ENCODE measurements at regions of chr9 and their contacts with region 1.

Region 1: GRCh38 chr9:4679268-4680172 is at the start of gene CDC37L1:
- DNase-seq: peak; percentile 94
- H3K4me3 Mint-ChIP-seq: no peak within 1 kb of the TSS
- H3K27ac Mint-ChIP-seq: no peak within 1 kb of the TSS
- H3K4me1 Mint-ChIP-seq: peaks cover 22% of the 10 kb centered on the region
- H3K27me3 Mint-ChIP-seq: no peaks in the 10 kb centered on the region
- CTCF ChIP-seq: peak; percentile 57
- total RNA-seq, gene CDC37L1: 13.8 and 20.4 TPM in 2 replicates

Region 2: GRCh38 chr9:4397917-4398316 is 281.6 kb before region 1 on chr9:
- CTCF ChIA-PET with region 1: no interaction called
- POLR2A ChIA-PET with region 1: no interaction called
- intact Hi-C with region 1: no loop called
- DNase-seq: peak; percentile 17
- H3K4me3 Mint-ChIP-seq: no peak overlapping the region
- H3K27ac Mint-ChIP-seq: no peak overlapping the region
- H3K4me1 Mint-ChIP-seq: peaks cover 6% of the 10 kb centered on the region
- H3K27me3 Mint-ChIP-seq: no peaks in the 10 kb centered on the region
- CTCF ChIP-seq: no peak

Region 3: DNA sequence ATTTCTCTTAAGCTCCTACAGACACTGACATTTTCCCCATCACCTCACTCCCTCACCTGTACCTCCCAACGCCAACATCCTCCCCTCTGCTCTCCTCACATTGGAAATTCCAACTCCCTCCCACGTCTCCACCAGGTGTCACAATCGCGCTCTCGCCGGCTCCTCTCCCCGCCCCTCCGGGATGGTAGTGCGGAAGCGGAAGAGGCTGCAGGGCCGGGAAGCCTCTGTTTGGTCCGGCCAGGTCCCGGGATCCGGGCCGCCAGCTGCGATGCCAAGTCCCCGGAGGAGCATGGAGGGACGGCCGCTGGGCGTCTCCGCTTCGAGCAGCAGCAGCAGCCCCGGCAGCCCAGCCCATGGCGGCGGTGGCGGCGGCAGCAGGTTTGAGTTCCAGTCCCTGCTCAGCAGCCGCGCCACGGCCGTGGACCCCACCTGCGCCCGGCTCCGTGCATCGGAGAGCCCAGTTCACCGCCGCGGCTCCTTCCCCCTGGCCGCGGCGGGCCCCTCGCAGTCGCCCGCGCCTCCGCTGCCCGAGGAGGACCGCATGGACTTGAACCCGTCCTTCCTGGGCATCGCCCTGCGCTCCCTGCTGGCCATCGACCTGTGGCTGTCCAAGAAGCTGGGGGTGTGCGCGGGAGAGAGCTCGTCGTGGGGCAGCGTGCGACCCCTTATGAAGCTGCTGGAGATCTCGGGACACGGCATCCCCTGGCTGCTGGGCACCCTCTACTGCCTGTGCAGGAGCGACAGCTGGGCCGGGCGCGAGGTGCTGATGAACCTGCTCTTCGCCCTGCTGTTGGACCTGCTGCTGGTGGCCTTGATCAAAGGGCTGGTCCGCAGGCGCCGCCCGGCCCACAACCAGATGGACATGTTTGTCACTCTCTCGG is 17.2 kb before region 1 on chr9 and contains the start of gene PLPP6:
- CTCF ChIA-PET with region 1: interaction called, 15 read pairs
- POLR2A ChIA-PET with region 1: interaction called, 42 read pairs
- intact Hi-C with region 1: loop called (anchors 2 kb)
- DNase-seq: peak; percentile 93
- H3K4me3 Mint-ChIP-seq: peak within 1 kb of the TSS; percentile 72
- H3K27ac Mint-ChIP-seq: peak within 1 kb of the TSS; percentile 65
- H3K4me1 Mint-ChIP-seq: peaks cover 40% of the 10 kb centered on the region
- H3K27me3 Mint-ChIP-seq: no peaks in the 10 kb centered on the region
- CTCF ChIP-seq: peak; percentile 29
- total RNA-seq, gene PLPP6: 6.3 and 8.3 TPM in 2 replicates

Region 4: DNA sequence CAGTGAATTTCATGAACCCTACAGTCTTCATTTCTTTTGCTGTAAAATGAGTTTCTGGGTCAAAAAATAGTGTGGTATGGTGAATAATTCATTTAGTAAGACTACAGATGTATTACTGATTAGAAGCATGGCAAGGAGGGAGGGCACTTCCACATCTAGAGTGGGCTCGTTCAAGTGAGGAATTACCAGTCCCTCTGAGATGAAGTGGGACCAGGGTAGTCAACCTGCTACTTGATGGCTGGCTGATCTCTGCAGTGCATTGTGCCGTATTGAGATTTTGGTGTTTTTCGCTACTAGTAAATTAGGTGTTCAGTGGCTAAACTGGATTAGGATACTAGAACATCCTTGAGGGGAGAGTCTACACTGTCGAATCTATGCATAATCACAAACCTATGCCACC is 10.6 kb after region 1 on chr9:
- CTCF ChIA-PET with region 1: interaction called, 6 read pairs
- POLR2A ChIA-PET with region 1: interaction called, 12 read pairs
- intact Hi-C with region 1: no loop called
- DNase-seq: no peak
- H3K4me3 Mint-ChIP-seq: no peak overlapping the region
- H3K27ac Mint-ChIP-seq: no peak overlapping the region
- H3K4me1 Mint-ChIP-seq: no peaks in the 10 kb centered on the region
- H3K27me3 Mint-ChIP-seq: no peaks in the 10 kb centered on the region
- CTCF ChIP-seq: no peak